H1 (cell line): ENCODE measurements at regions of chr3 and their contacts with region 1.

Region 1: GRCh38 chr3:39447637-39448483 is 19.6 kb upstream of the MOBP start:
- DNase-seq: peak; percentile 46 to 69
- H3K4me3 ChIP-seq: no peak overlapping the region
- H3K27ac ChIP-seq: no peak overlapping the region
- H3K4me1 ChIP-seq: no peaks in the 10 kb centered on the region
- H3K27me3 ChIP-seq: no peaks in the 10 kb centered on the region
- CTCF ChIP-seq: peak; percentile 52 to 97 (median 90)
- EP300 ChIP-seq: no peak
- POLR2A ChIP-seq: no peak
- RAD21 ChIP-seq: peak; percentile 91 to 95

Region 2: DNA sequence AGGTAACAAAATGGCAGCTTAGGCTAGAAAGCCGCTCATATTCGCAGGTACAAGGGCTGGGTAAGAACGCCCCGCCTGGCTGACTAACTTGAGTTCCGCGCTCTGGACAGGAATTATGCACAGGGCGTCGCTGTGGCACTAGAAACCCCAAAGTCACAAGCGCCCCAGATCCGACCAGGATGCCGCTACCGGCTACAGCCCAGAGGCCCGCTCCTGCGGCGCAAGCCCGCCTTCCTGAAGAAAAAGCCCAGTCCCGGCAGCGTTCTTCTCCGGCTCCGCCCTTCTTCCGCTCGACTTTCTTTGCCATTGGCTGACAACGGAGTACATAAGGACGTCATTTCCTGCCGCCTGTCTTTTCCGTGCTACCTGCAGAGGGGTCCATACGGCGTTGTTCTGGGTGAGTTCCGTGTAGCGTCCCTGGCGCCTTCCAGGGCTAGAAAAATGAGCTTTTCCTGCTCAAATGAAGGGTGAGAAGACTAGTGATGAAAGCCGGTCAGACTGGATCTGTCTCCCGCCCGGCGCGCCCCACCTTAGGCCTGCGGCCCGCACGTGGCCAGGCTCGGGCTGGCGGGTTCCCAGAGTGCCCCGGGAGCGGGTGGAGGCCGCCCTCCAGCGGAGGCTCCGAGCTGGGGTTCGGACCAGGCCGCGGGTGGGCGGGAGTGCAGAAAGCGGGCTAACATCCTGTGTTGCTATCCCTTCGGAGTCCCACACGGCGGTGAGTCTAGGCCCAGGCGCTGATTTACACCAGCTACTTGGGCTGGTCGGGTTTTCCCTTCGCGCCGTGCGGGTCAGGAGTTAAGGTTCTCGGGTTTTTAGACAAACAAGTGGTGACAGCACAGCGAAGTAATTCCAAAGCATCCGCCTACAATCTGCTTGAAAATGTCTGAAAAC is 41.2 kb before region 1 on chr3 and contains the start of gene RPSA:
- CTCF ChIA-PET with region 1: interaction called, 6 read pairs
- POLR2A ChIA-PET with region 1: interaction called, 10 read pairs
- DNase-seq: peak; percentile 93 to 96
- H3K4me3 ChIP-seq: peak within 1 kb of the TSS; percentile 68 to 94 (median 86)
- H3K27ac ChIP-seq: peak within 1 kb of the TSS; percentile 95
- H3K4me1 ChIP-seq: peaks cover 10 to 14% (median 11%) of the 10 kb centered on the region in 4 experiments
- H3K27me3 ChIP-seq: no peaks in the 10 kb centered on the region
- CTCF ChIP-seq: peak in 2 of 3 experiments; percentile 21 to 52; a peak in 3 of 4 replicates
- EP300 ChIP-seq: peak in 1 of 2 experiments; percentile 35; a peak in 1 of 3 replicates
- POLR2A ChIP-seq: peak; percentile 97 to 99
- RAD21 ChIP-seq: peak; percentile 62
- total RNA-seq, gene RPSA: 2,661 and 2,701 TPM in 2 replicates

Region 3: DNA sequence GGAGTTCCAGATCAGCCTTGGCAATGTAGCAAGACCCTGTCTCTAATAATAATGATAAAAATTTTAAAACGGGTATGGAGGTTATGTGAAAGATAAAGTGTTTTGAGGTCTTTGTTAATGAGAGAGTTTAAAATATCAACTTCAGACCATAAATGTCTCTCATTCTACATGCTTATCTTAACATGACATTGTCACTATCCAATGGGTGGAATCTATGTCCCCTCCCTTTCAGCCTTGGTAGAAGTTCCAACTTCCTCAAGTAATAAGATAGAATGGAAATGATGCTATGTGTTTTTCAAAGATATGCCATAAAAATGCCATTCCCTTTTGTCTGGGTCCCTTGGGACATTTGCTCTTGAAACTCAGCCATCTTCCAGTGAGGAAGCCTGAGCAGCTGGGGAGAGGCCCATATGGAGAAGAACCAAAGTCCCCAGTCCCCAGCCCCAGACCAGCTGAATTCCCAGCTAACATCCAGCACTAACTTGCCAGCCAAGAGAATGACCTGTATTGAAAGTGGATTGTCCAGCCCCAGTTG is 24.4 kb before region 1 on chr3:
- CTCF ChIA-PET with region 1: interaction called, 36 read pairs
- POLR2A ChIA-PET with region 1: interaction called, 3 read pairs
- DNase-seq: no peak
- H3K4me3 ChIP-seq: no peak overlapping the region
- H3K27ac ChIP-seq: no peak overlapping the region
- H3K4me1 ChIP-seq: peaks cover 0 to 3% (median 0%) of the 10 kb centered on the region in 4 experiments; a peak in 2 of 7 replicates
- H3K27me3 ChIP-seq: no peaks in the 10 kb centered on the region
- CTCF ChIP-seq: no peak
- EP300 ChIP-seq: no peak
- POLR2A ChIP-seq: no peak
- RAD21 ChIP-seq: no peak

Region 4: DNA sequence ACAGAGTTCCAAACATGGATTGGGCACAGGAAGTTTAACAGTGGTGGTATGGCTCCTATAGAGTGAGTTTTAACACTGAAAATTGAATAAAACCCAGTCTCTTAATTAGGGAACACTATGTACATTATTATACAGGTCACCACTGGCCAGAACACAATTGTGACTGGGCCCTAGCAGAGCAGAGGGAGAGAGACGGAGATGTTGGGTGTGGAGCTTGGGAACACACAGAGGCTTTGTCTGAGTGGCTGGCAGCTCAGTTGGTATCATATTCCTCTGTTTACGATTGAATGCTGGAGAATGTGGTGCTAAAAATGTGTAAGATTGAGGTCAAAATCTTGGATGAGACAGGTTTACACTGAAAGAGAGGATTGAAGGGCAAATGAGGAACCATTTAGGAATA is 12.8 kb after region 1 on chr3:
- CTCF ChIA-PET with region 1: interaction called, 24 read pairs
- POLR2A ChIA-PET with region 1: no interaction called
- DNase-seq: no peak
- H3K4me3 ChIP-seq: no peak overlapping the region
- H3K27ac ChIP-seq: no peak overlapping the region
- H3K4me1 ChIP-seq: no peaks in the 10 kb centered on the region; a peak in 1 of 7 replicates
- H3K27me3 ChIP-seq: no peaks in the 10 kb centered on the region
- CTCF ChIP-seq: no peak
- EP300 ChIP-seq: no peak
- POLR2A ChIP-seq: no peak
- RAD21 ChIP-seq: no peak

Region 5: GRCh38 chr3:39473452-39474127 is 25.7 kb after region 1 on chr3:
- CTCF ChIA-PET with region 1: interaction called, 14 read pairs
- POLR2A ChIA-PET with region 1: no interaction called
- DNase-seq: peak in 1 of 2 experiments; percentile 21
- H3K4me3 ChIP-seq: peak overlapping the region in 1 of 4 experiments; percentile 20; a peak in 1 of 8 replicates
- H3K27ac ChIP-seq: no peak overlapping the region; the same call in 1 of the 2 replicates
- H3K4me1 ChIP-seq: peaks cover 0 to 3% (median 0%) of the 10 kb centered on the region in 4 experiments; a peak in 1 of 7 replicates
- H3K27me3 ChIP-seq: no peaks in the 10 kb centered on the region
- CTCF ChIP-seq: no peak
- EP300 ChIP-seq: no peak
- POLR2A ChIP-seq: no peak
- RAD21 ChIP-seq: no peak

Region 6: GRCh38 chr3:39499651-39500240 is 51.9 kb after region 1 on chr3:
- CTCF ChIA-PET with region 1: interaction called, 122 read pairs
- POLR2A ChIA-PET with region 1: interaction called, 4 read pairs
- DNase-seq: no peak
- H3K4me3 ChIP-seq: no peak overlapping the region
- H3K27ac ChIP-seq: no peak overlapping the region
- H3K4me1 ChIP-seq: no peaks in the 10 kb centered on the region
- H3K27me3 ChIP-seq: peaks cover 0 to 2% (median 0%) of the 10 kb centered on the region in 4 experiments; a peak in 2 of 7 replicates
- CTCF ChIP-seq: no peak
- EP300 ChIP-seq: no peak
- POLR2A ChIP-seq: no peak
- RAD21 ChIP-seq: no peak